K562 (cell line): ENCODE measurements at regions of chr3 and their contacts with region 1.

Region 1: GRCh38 chr3:112582244-112582874 is 20.5 kb downstream of the SLC35A5 start:
- DNase-seq: peak in 3 of 4 experiments; percentile 11 to 49 (median 16)
- ATAC-seq: peak; percentile 53; the same call in 2 of the 3 replicates
- H3K4me3 ChIP-seq: no peak overlapping the region
- H3K27ac ChIP-seq: no peak overlapping the region
- H3K4me1 ChIP-seq: no peaks in the 10 kb centered on the region
- H3K27me3 ChIP-seq: no peaks in the 10 kb centered on the region
- CTCF ChIP-seq: peak; percentile 30 to 72 (median 40); a peak in 5 of 6 replicates
- EP300 ChIP-seq: no peak
- POLR2A ChIP-seq: no peak
- RAD21 ChIP-seq: peak; percentile 67 to 76

Region 2: GRCh38 chr3:112734718-112735350 is 152.5 kb after region 1 on chr3:
- CTCF ChIA-PET with region 1: no interaction called
- POLR2A ChIA-PET with region 1: no interaction called
- in situ Hi-C with region 1: no loop called
- intact Hi-C with region 1: loop called (anchors 10 kb)
- DNase-seq: peak; percentile 37 to 73 (median 49)
- ATAC-seq: peak; percentile 93
- H3K4me3 ChIP-seq: no peak overlapping the region
- H3K27ac ChIP-seq: no peak overlapping the region
- H3K4me1 ChIP-seq: peaks cover 0 to 4% of the 10 kb centered on the region in 2 experiments; a peak in 1 of 5 replicates
- H3K27me3 ChIP-seq: no peaks in the 10 kb centered on the region
- CTCF ChIP-seq: peak; percentile 53 to 75 (median 65)
- EP300 ChIP-seq: no peak
- POLR2A ChIP-seq: no peak
- RAD21 ChIP-seq: peak; percentile 72 to 79